Prostate gland (tissue), 2 donors: ENCODE measurements at regions of chr22 and their contacts with region 1.

Region 1: GRCh38 chr22:37792494-37792893 is 15.2 kb upstream of the GCAT start:
- DNase-seq: no peak
- H3K4me3 ChIP-seq: no peak overlapping the region
- H3K27ac ChIP-seq: no peak overlapping the region
- H3K4me1 ChIP-seq: no peaks in the 10 kb centered on the region
- H3K27me3 ChIP-seq: no peaks in the 10 kb centered on the region
- CTCF ChIP-seq: no peak
- POLR2A ChIP-seq: no peak

Region 2: DNA sequence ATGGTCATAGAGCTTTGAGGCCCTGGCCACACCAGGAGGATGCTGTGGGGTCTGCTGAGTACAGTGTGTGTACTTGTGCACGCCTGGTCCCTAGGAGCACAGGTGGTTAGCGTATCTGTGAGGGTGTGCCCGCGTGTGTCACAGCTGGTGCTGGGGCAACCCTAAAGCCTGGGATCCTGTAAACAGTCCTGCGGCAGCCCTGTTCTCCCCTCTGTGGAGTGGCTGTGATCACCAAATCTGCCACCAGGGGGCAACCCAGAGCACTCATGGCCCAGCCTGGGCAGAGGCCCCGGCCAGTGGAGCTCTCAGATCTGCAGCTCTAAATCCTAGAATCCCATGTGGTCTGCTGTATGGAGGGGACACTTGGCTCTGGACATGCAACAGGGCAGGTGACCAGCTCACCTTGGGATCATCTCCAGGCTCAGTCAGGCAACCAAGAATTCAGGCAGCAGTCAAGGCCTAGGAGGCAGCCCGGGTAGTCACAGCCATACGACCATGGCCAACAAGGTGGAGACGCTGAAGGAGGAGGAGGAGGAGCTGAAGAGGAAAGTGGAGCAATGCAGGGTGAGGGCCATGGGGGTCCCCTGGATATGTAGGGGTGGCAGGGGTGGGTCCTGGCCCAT is 149.2 kb before region 1 on chr22:
- intact Hi-C with region 1: loop called (anchors 5 kb)
- DNase-seq: peak; percentile 74
- H3K4me3 ChIP-seq: no peak overlapping the region
- H3K27ac ChIP-seq: no peak overlapping the region
- H3K4me1 ChIP-seq: no peaks in the 10 kb centered on the region
- H3K27me3 ChIP-seq: no peaks in the 10 kb centered on the region
- CTCF ChIP-seq: peak; percentile 89 to 93 (median 90)
- POLR2A ChIP-seq: no peak

Region 3: GRCh38 chr22:37734964-37735451 is 57.5 kb before region 1 on chr22:
- intact Hi-C with region 1: loop called (anchors 5 kb)
- DNase-seq: no peak
- H3K4me3 ChIP-seq: no peak overlapping the region
- H3K27ac ChIP-seq: no peak overlapping the region
- H3K4me1 ChIP-seq: no peaks in the 10 kb centered on the region
- H3K27me3 ChIP-seq: no peaks in the 10 kb centered on the region
- CTCF ChIP-seq: peak in 1 of 4 experiments; percentile 36
- POLR2A ChIP-seq: no peak